PC-3 (cell line): ENCODE measurements at regions of chr5 and their contacts with region 1.

Region 1: GRCh38 chr5:28766565-28767158 is 1728.3 kb upstream of the CDH9 start:
- DNase-seq: peak; percentile 73
- ATAC-seq: peak; percentile 33; the same call in 1 of the 2 replicates
- H3K4me3 ChIP-seq: no peak overlapping the region
- H3K27ac ChIP-seq: no peak overlapping the region
- H3K4me1 ChIP-seq: peaks cover 7% of the 10 kb centered on the region
- H3K27me3 ChIP-seq: no peaks in the 10 kb centered on the region
- CTCF ChIP-seq: peak; percentile 64

Region 2: GRCh38 chr5:27682599-27682998 is 1084.1 kb before region 1 on chr5:
- CTCF ChIA-PET with region 1: no interaction called
- POLR2A ChIA-PET with region 1: no interaction called
- intact Hi-C with region 1: loop called (anchors 5 kb)
- DNase-seq: peak; percentile 40
- ATAC-seq: peak; percentile 49; the same call in 1 of the 2 replicates
- H3K4me3 ChIP-seq: no peak overlapping the region
- H3K27ac ChIP-seq: no peak overlapping the region
- H3K4me1 ChIP-seq: no peaks in the 10 kb centered on the region
- H3K27me3 ChIP-seq: no peaks in the 10 kb centered on the region
- CTCF ChIP-seq: peak; percentile 52

Region 3: DNA sequence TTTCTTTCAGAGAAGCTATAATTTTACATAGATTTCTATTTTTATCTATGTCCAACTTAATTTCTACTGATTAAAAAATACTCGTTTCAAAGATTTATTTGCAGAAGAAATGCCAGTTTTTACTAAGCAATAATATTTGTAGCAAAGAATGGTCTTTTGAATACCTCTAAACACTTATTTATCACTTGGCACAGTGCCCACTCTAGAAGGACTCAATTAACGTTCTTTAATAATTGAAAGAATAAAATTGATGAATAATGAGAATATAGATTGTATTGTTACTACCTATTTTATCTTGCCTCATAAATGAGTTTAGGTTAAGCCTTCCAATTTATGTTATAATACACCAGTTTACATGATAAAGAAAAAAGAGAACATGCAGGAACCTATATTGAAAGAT is 838.6 kb before region 1 on chr5:
- CTCF ChIA-PET with region 1: no interaction called
- POLR2A ChIA-PET with region 1: no interaction called
- intact Hi-C with region 1: loop called (anchors 2 kb)
- DNase-seq: no peak
- ATAC-seq: no peak
- H3K4me3 ChIP-seq: no peak overlapping the region
- H3K27ac ChIP-seq: no peak overlapping the region
- H3K4me1 ChIP-seq: no peaks in the 10 kb centered on the region
- H3K27me3 ChIP-seq: no peaks in the 10 kb centered on the region
- CTCF ChIP-seq: no peak

Region 4: DNA sequence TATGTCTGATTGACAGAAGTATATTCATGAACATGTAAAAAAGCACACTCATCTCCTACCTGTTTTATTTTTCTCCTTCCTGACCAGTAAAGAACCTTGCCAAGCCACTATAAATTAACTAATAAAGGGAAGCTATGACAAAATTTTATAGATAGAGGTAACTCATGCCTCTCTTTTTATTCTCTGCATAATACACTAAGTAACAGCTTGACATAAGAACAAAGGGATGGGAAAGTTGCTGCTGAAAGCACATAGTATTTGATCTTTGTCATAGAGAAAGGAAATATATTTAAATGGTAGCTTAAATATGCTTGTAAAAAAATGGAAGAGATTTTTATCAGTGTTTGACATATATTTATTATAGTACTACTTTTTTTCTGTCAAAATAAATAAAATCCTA is 662.6 kb before region 1 on chr5:
- CTCF ChIA-PET with region 1: no interaction called
- POLR2A ChIA-PET with region 1: no interaction called
- intact Hi-C with region 1: loop called (anchors 10 kb)
- DNase-seq: no peak
- ATAC-seq: peak; percentile 85
- H3K4me3 ChIP-seq: no peak overlapping the region
- H3K27ac ChIP-seq: no peak overlapping the region
- H3K4me1 ChIP-seq: no peaks in the 10 kb centered on the region
- H3K27me3 ChIP-seq: no peaks in the 10 kb centered on the region
- CTCF ChIP-seq: no peak

Region 5: GRCh38 chr5:28344803-28345433 is 421.7 kb before region 1 on chr5:
- CTCF ChIA-PET with region 1: interaction called, 3 read pairs
- POLR2A ChIA-PET with region 1: no interaction called
- intact Hi-C with region 1: loop called (anchors 1 kb)
- DNase-seq: peak; percentile 77
- ATAC-seq: peak; percentile 62
- H3K4me3 ChIP-seq: no peak overlapping the region
- H3K27ac ChIP-seq: no peak overlapping the region
- H3K4me1 ChIP-seq: no peaks in the 10 kb centered on the region
- H3K27me3 ChIP-seq: no peaks in the 10 kb centered on the region
- CTCF ChIP-seq: peak; percentile 89

Region 6: GRCh38 chr5:28473531-28474107 is 293.0 kb before region 1 on chr5:
- CTCF ChIA-PET with region 1: interaction called, 4 read pairs
- POLR2A ChIA-PET with region 1: no interaction called
- intact Hi-C with region 1: loop called (anchors 1 kb)
- DNase-seq: peak; percentile 75
- ATAC-seq: peak; percentile 86
- H3K4me3 ChIP-seq: no peak overlapping the region
- H3K27ac ChIP-seq: no peak overlapping the region
- H3K4me1 ChIP-seq: no peaks in the 10 kb centered on the region
- H3K27me3 ChIP-seq: no peaks in the 10 kb centered on the region
- CTCF ChIP-seq: peak; percentile 80

Region 7: GRCh38 chr5:28576022-28576421 is 190.6 kb before region 1 on chr5:
- CTCF ChIA-PET with region 1: no interaction called
- POLR2A ChIA-PET with region 1: no interaction called
- intact Hi-C with region 1: loop called (anchors 5 kb)
- DNase-seq: peak; percentile 54
- ATAC-seq: peak; percentile 77
- H3K4me3 ChIP-seq: no peak overlapping the region
- H3K27ac ChIP-seq: no peak overlapping the region
- H3K4me1 ChIP-seq: peaks cover 4% of the 10 kb centered on the region; the same call in 1 of the 2 replicates
- H3K27me3 ChIP-seq: no peaks in the 10 kb centered on the region
- CTCF ChIP-seq: peak; percentile 73

Region 8: GRCh38 chr5:28714907-28715698 is 51.6 kb before region 1 on chr5:
- CTCF ChIA-PET with region 1: no interaction called
- POLR2A ChIA-PET with region 1: no interaction called
- intact Hi-C with region 1: no loop called
- DNase-seq: no peak
- ATAC-seq: no peak
- H3K4me3 ChIP-seq: no peak overlapping the region
- H3K27ac ChIP-seq: no peak overlapping the region
- H3K4me1 ChIP-seq: no peaks in the 10 kb centered on the region
- H3K27me3 ChIP-seq: no peaks in the 10 kb centered on the region
- CTCF ChIP-seq: no peak

Region 9: DNA sequence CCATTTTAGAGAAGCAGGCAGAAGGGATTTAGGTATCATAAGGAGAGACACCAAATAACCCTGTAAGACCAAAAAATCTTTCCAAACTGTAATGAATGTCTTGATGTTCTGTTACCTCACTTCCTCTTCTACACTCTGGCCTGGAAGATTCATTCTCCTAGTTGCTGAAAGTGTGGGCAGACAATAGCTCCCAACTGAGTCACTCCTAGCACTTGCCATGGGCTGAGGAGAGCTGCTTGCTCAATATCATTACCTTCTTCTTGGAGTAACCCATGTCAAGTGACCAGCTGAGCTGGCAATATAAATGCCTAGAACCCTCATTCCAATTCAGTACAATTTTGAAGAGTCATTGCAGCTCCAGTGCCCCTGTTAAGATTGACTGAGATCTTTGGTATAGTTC is 441.4 kb after region 1 on chr5:
- CTCF ChIA-PET with region 1: no interaction called
- POLR2A ChIA-PET with region 1: no interaction called
- intact Hi-C with region 1: no loop called
- DNase-seq: peak; percentile 26
- ATAC-seq: no peak
- H3K4me3 ChIP-seq: no peak overlapping the region
- H3K27ac ChIP-seq: no peak overlapping the region
- H3K4me1 ChIP-seq: no peaks in the 10 kb centered on the region
- H3K27me3 ChIP-seq: no peaks in the 10 kb centered on the region
- CTCF ChIP-seq: no peak